Naive thymus-derived CD4-positive, alpha-beta T cell (primary cell): ENCODE measurements at regions of chr12 and their contacts with region 1.

Region 1: DNA sequence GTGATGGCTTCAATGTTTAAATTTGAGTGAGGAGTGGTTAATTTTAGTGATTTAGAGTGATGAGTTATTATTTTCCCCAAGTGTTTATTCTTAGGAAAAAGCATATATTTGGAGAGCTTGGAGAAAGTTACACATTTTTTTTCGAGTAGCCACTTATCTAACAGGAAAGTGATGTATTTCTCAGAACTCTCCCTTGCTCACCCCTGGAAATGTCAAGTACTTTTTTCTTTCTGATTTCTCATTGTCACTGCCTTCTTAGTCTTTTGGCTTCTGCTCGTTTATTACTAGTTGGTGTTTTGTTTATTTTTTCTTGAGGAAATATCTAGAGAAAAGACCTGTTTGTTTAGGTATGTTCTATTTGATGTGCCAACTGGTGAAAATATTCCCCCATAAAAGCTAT is 58.8 kb downstream of the AEBP2 start:
- DNase-seq: no peak
- ATAC-seq: no peak
- H3K4me3 ChIP-seq: no peak overlapping the region
- H3K4me3 Mint-ChIP-seq: peak overlapping the region in 1 of 10 donors; percentile 10
- H3K27ac ChIP-seq: no peak overlapping the region
- H3K27ac Mint-ChIP-seq: peak overlapping the region in 5 of 9 donors; percentile 22 to 75 (median 41)
- H3K4me1 ChIP-seq: no peaks in the 10 kb centered on the region
- H3K4me1 Mint-ChIP-seq: peaks cover 10 to 35% (median 24%) of the 10 kb centered on the region in 7 donors
- H3K27me3 ChIP-seq: no peaks in the 10 kb centered on the region
- H3K27me3 Mint-ChIP-seq: no peaks in the 10 kb centered on the region

Region 2: DNA sequence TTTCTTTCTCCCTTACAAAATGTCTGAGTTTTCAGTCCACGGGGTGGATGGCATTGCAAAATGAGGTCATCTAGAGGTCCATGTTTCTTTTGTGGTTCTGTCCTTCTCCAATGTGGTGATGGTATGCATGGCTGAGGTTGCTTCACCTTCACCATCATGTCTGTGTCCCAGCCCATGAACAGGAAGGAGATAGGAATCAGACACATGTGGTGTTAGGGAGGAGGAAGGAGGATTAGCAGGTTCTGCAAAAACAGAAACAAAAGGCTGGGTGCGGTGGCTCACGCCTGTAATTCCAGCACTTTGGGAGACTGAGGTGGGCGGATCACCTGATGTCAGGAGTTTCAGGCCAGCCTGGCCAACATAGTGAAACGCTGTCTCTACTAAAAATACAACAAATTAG is 69.8 kb before region 1 on chr12:
- CTCF ChIA-PET with region 1: no interaction called
- POLR2A ChIA-PET with region 1: no interaction called
- intact Hi-C with region 1: no loop called
- DNase-seq: no peak
- ATAC-seq: peak; percentile 57
- H3K4me3 ChIP-seq: no peak overlapping the region
- H3K4me3 Mint-ChIP-seq: no peak overlapping the region
- H3K27ac ChIP-seq: no peak overlapping the region
- H3K27ac Mint-ChIP-seq: no peak overlapping the region
- H3K4me1 ChIP-seq: no peaks in the 10 kb centered on the region
- H3K4me1 Mint-ChIP-seq: peaks cover 0 to 26% (median 0%) of the 10 kb centered on the region in 7 donors
- H3K27me3 ChIP-seq: no peaks in the 10 kb centered on the region
- H3K27me3 Mint-ChIP-seq: no peaks in the 10 kb centered on the region

Region 3: GRCh38 chr12:19456176-19456575 is 41.9 kb before region 1 on chr12:
- CTCF ChIA-PET with region 1: no interaction called
- POLR2A ChIA-PET with region 1: no interaction called
- intact Hi-C with region 1: loop called in 1 of 2 experiments (anchors 5 kb)
- DNase-seq: no peak
- ATAC-seq: no peak
- H3K4me3 ChIP-seq: no peak overlapping the region
- H3K4me3 Mint-ChIP-seq: peak overlapping the region in 1 of 10 donors; percentile 39
- H3K27ac ChIP-seq: no peak overlapping the region
- H3K27ac Mint-ChIP-seq: peak overlapping the region in 2 of 9 donors; percentile 12 to 27
- H3K4me1 ChIP-seq: peaks cover 0 to 11% of the 10 kb centered on the region in 2 donors
- H3K4me1 Mint-ChIP-seq: peaks cover 36 to 90% (median 72%) of the 10 kb centered on the region in 7 donors
- H3K27me3 ChIP-seq: no peaks in the 10 kb centered on the region
- H3K27me3 Mint-ChIP-seq: no peaks in the 10 kb centered on the region